Psoas muscle (tissue), 8 donors: ENCODE measurements at regions of chr12 and their contacts with region 1.

Region 1: GRCh38 chr12:7271893-7272514 is 31.9 kb upstream of the ACSM4 start:
- DNase-seq: no peak
- ATAC-seq: no peak
- H3K4me3 ChIP-seq: no peak overlapping the region
- H3K27ac ChIP-seq: no peak overlapping the region
- H3K4me1 ChIP-seq: no peaks in the 10 kb centered on the region
- H3K27me3 ChIP-seq: no peaks in the 10 kb centered on the region
- CTCF ChIP-seq: no peak

Region 2: DNA sequence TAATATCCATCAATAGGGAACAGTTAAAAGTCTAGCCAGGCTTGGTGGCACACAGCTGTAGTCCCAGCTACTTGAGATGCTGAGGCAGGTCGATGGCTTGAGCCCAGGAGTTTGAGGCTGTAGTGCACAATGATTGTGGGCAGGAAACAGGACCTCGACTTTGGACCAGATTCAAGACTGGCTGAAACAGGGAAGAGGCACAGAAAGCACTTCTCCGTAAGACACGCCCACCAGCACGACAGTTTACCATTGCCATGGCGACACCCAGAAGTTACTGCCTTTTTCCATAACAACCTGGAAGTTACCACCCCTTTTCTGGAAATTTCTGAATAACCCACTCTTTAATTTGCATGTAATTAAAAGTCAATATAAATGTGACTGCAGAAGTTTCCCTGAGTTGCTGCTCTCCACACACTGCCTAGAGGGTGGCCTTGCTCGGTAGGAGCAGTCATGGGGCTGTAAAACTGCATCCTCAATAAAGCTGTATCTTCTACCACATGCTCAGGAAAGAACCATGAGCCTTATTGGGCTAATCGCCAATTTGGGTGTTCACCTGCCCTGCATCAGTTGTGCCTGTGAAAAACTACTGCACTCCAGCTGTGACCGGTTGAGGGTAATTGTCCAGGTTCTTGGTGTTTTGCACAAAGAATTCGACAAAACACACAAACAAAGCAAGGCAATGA is 372.0 kb before region 1 on chr12:
- intact Hi-C with region 1: loop called in 1 of 2 experiments (anchors 5 kb)
- DNase-seq: no peak
- ATAC-seq: no peak
- H3K4me3 ChIP-seq: no peak overlapping the region
- H3K27ac ChIP-seq: no peak overlapping the region
- H3K4me1 ChIP-seq: peaks cover 5% of the 10 kb centered on the region
- H3K27me3 ChIP-seq: no peaks in the 10 kb centered on the region
- CTCF ChIP-seq: no peak

Region 3: DNA sequence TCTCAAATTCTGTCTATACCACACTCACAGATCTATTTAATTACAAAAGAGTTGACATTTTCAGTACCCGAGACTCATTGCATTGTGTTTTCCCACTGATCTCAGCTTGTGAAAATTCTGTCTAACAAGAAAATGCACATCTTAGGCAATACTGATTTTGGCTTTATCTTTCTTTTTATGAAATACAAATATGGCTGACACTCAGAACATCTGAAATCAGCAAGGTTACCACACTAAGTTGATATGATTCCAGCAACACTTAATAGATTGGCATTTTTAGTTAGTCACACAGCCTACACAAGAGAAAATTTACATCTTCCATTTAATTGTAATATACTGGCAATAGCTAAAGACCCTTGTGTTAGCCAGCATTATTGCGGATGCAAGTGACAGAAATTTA is 42.3 kb before region 1 on chr12:
- intact Hi-C with region 1: no loop called
- DNase-seq: no peak
- ATAC-seq: no peak
- H3K4me3 ChIP-seq: no peak overlapping the region
- H3K27ac ChIP-seq: no peak overlapping the region
- H3K4me1 ChIP-seq: no peaks in the 10 kb centered on the region
- H3K27me3 ChIP-seq: no peaks in the 10 kb centered on the region
- CTCF ChIP-seq: no peak